Panc1 (cell line): ENCODE measurements at regions of chr1 and their contacts with region 1.

Region 1: GRCh38 chr1:109397538-109398342 is at the start of gene SORT1:
- DNase-seq: no peak
- ATAC-seq: peak; percentile 98
- H3K4me3 ChIP-seq: peak within 1 kb of the TSS; percentile 50 to 63
- H3K27ac ChIP-seq: peak within 1 kb of the TSS; percentile 79
- H3K4me1 ChIP-seq: peaks cover 18% of the 10 kb centered on the region
- H3K27me3 ChIP-seq: no peaks in the 10 kb centered on the region
- CTCF ChIP-seq: no peak
- total RNA-seq, gene SORT1: 25.1 TPM

Region 2: GRCh38 chr1:107963601-107964335 is 1434.0 kb before region 1 on chr1:
- CTCF ChIA-PET with region 1: no interaction called
- POLR2A ChIA-PET with region 1: no interaction called
- in situ Hi-C with region 1: no loop called
- intact Hi-C with region 1: no loop called
- DNase-seq: no peak
- ATAC-seq: no peak
- H3K4me3 ChIP-seq: peak overlapping the region; percentile 19 to 24; a peak in 2 of 4 replicates
- H3K27ac ChIP-seq: no peak overlapping the region
- H3K4me1 ChIP-seq: peaks cover 2% of the 10 kb centered on the region; the same call in 1 of the 2 replicates
- H3K27me3 ChIP-seq: peaks cover 10% of the 10 kb centered on the region; the same call in 1 of the 2 replicates
- CTCF ChIP-seq: no peak

Region 3: GRCh38 chr1:109263597-109264398 is 133.9 kb before region 1 on chr1:
- CTCF ChIA-PET with region 1: interaction called, 5 read pairs
- POLR2A ChIA-PET with region 1: no interaction called
- in situ Hi-C with region 1: no loop called
- intact Hi-C with region 1: loop called (anchors 5 kb)
- DNase-seq: no peak
- ATAC-seq: peak; percentile 98
- H3K4me3 ChIP-seq: no peak overlapping the region
- H3K27ac ChIP-seq: no peak overlapping the region
- H3K4me1 ChIP-seq: no peaks in the 10 kb centered on the region
- H3K27me3 ChIP-seq: no peaks in the 10 kb centered on the region
- CTCF ChIP-seq: peak; percentile 96

Region 4: GRCh38 chr1:109277434-109278204 is 120.1 kb before region 1 on chr1:
- CTCF ChIA-PET with region 1: interaction called, 4 read pairs
- POLR2A ChIA-PET with region 1: interaction called, 7 read pairs
- in situ Hi-C with region 1: no loop called
- intact Hi-C with region 1: loop called (anchors 1 kb)
- DNase-seq: no peak
- ATAC-seq: peak; percentile 80
- H3K4me3 ChIP-seq: no peak overlapping the region
- H3K27ac ChIP-seq: peak overlapping the region; percentile 23
- H3K4me1 ChIP-seq: peaks cover 30% of the 10 kb centered on the region
- H3K27me3 ChIP-seq: no peaks in the 10 kb centered on the region
- CTCF ChIP-seq: peak; percentile 85